ENCODE measurements at regions of chr14 and their contacts with region 1.

Region 1: DNA sequence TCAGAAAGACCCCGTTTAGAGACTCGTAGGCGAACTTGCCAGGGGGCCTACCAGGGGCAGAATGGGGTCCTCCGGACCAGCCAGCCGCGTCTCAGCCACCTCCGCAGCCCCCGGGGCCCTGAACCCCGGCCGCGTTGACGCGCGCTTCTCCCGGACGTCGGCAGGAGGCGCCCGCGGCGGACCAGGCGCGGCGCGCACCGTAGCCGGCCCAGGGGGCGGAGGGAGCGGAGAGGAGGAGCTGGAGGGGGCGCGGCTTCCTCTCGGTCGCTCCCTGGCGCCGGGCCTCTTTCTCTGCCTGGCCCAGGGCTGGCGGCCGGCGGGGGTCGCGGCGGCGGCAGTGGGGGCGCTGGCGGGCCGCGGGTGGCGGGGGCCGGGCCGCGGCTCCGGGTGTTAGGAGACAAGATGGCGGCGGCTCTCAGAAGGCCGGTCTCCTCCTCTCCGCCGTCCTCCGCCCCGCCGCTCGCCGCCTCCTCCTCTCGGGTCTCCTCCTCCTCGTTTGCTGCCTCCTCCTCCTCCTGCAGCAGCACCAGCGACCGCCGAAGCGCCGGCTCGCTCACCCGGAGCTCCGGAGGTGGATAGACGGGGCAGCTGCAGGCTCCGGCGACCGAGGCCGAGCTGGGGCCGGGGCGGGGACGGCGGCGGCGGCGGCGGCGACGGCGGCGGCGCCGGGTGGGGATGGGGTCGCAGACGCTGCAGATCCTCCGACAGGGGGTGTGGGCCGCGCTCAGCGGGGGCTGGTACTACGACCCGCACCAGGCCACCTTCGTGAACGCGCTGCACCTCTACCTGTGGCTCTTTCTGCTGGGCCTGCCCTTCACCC is at the start of gene PCNX1:
- DNase-seq: peak; percentile 83
- H3K4me3 Mint-ChIP-seq: peak within 1 kb of the TSS; percentile 97
- H3K27ac Mint-ChIP-seq: peak within 1 kb of the TSS; percentile 96
- H3K4me1 Mint-ChIP-seq: peaks cover 33% of the 10 kb centered on the region
- H3K27me3 Mint-ChIP-seq: no peaks in the 10 kb centered on the region
- CTCF ChIP-seq: peak; percentile 92
- total RNA-seq, gene PCNX1: 48.7 and 55.6 TPM in 2 replicates

Region 2: DNA sequence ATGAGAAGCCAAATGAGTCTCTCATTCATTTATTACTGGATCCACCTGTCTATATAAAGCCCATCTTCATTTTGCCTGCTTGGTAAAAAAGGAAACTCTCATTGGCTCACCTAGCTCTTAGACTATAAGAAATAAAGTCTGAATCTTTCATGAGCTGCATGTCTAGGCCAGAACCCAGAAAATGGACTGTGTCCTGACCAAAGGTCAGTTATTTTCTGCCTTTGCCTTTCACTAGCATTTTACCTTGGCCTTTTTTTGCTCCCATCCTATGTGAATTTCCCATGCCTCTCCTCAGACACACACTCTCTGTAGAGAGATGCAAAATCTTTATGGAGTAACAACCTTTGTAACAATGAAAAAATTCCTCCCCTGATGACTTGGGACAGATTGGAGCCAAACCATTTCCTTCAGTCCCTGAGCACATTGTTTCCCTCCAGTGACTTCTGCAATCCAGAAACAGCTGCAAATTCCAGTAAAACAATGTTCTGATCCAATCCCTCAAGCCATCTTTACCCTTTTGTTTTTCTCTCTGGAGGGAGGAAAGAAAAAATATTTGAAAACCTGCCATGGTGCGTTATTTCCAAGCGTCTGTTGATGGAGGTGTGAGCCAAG is 64.4 kb before region 1 on chr14:
- CTCF ChIA-PET with region 1: no interaction called
- POLR2A ChIA-PET with region 1: no interaction called
- intact Hi-C with region 1: no loop called
- DNase-seq: no peak
- H3K4me3 Mint-ChIP-seq: no peak overlapping the region
- H3K27ac Mint-ChIP-seq: no peak overlapping the region
- H3K4me1 Mint-ChIP-seq: no peaks in the 10 kb centered on the region
- H3K27me3 Mint-ChIP-seq: no peaks in the 10 kb centered on the region
- CTCF ChIP-seq: no peak

Region 3: GRCh38 chr14:70887207-70887681 is 20.1 kb before region 1 on chr14:
- CTCF ChIA-PET with region 1: interaction called, 16 read pairs
- POLR2A ChIA-PET with region 1: interaction called, 12 read pairs
- intact Hi-C with region 1: no loop called
- DNase-seq: peak; percentile 31
- H3K4me3 Mint-ChIP-seq: no peak overlapping the region
- H3K27ac Mint-ChIP-seq: peak overlapping the region; percentile 0
- H3K4me1 Mint-ChIP-seq: peaks cover 32% of the 10 kb centered on the region
- H3K27me3 Mint-ChIP-seq: no peaks in the 10 kb centered on the region
- CTCF ChIP-seq: no peak

Region 4: GRCh38 chr14:70919774-70920173 is 12.4 kb after region 1 on chr14:
- CTCF ChIA-PET with region 1: interaction called, 6 read pairs
- POLR2A ChIA-PET with region 1: interaction called, 53 read pairs
- intact Hi-C with region 1: no loop called
- DNase-seq: peak; percentile 49
- H3K4me3 Mint-ChIP-seq: peak overlapping the region; percentile 7
- H3K27ac Mint-ChIP-seq: peak overlapping the region; percentile 80
- H3K4me1 Mint-ChIP-seq: peaks cover 51% of the 10 kb centered on the region
- H3K27me3 Mint-ChIP-seq: no peaks in the 10 kb centered on the region
- CTCF ChIP-seq: no peak

Region 5: GRCh38 chr14:70955543-70956480 is 48.4 kb after region 1 on chr14:
- CTCF ChIA-PET with region 1: interaction called, 10 read pairs
- POLR2A ChIA-PET with region 1: interaction called, 17 read pairs
- intact Hi-C with region 1: loop called (anchors 1 kb)
- DNase-seq: peak; percentile 57
- H3K4me3 Mint-ChIP-seq: no peak overlapping the region
- H3K27ac Mint-ChIP-seq: no peak overlapping the region
- H3K4me1 Mint-ChIP-seq: peaks cover 6% of the 10 kb centered on the region
- H3K27me3 Mint-ChIP-seq: no peaks in the 10 kb centered on the region
- CTCF ChIP-seq: peak; percentile 52

Region 6: DNA sequence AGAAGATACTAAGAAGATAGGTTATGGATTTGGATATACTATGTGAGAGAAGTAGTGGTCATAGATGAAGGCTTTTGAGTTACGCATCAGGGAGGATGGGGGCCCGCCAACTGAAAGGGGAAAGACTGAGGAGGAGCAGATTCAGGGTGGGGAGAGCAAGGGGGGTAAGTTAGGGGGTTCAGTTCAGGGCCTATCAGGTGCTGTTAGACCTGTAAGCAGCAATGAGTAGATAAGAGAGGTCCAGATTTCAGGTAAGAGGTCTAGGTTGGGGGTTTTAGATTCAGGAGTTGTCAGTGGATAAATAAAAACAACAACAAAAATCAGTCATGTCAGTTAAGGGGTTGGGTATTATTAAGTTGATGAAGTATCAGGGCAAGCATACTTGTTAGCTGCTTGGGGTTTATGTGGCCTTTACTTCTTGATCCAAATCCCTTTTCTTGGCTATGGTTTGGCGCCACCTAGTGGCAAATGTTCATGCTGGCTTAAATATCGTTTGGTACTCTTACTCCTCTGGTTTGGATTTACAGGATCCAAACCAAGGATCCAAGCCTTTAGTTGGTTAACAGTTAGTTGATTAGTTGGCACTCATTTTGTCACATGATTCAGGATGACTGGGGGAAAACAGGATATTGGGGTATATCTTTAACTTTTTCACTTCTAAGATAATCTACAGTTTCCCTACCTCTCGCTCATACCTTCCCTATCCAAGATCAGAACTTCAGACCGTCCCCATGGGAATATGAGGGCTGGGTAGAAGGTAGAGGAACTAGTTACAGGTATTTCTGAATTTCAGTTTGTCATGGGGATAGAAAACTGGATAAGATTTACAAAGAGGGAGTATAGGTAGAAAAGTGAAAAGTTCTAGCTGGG is 65.0 kb after region 1 on chr14:
- CTCF ChIA-PET with region 1: interaction called, 30 read pairs
- POLR2A ChIA-PET with region 1: interaction called, 10 read pairs
- intact Hi-C with region 1: loop called (anchors 1 kb)
- DNase-seq: peak; percentile 88
- H3K4me3 Mint-ChIP-seq: no peak overlapping the region
- H3K27ac Mint-ChIP-seq: peak overlapping the region; percentile 53
- H3K4me1 Mint-ChIP-seq: peaks cover 8% of the 10 kb centered on the region
- H3K27me3 Mint-ChIP-seq: no peaks in the 10 kb centered on the region
- CTCF ChIP-seq: peak; percentile 81

Measured in MCF 10A (cell line).